ENCODE measurements at regions of chr4 and their contacts with region 1.

Region 1: DNA sequence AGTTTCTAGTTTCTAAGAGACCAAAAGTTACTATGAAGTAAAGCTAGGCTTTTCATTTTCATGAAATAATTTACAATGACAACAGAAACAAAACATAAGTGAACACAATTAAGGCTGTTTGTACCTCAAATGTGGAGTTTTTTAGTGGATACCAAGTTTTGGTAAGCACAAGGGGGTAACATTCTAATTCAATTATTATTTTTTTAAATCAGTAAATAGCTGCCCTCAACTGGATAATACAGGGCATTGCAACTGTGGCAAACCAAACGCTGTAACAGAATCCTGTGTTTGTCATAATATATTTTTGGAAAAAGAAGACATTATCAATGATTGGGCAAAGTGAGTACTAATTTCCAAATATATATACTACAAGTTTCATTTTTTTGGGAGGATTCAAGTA is 150.3 kb downstream of the FBXW7 start:
- DNase-seq: peak in 1 of 2 donors; percentile 4
- H3K4me3 ChIP-seq: no peak overlapping the region
- H3K27ac ChIP-seq: no peak overlapping the region
- H3K4me1 ChIP-seq: peaks cover 5 to 6% of the 10 kb centered on the region in 2 donors
- H3K27me3 ChIP-seq: no peaks in the 10 kb centered on the region
- CTCF ChIP-seq: peak in 5 of 6 experiments; percentile 24 to 65 (median 50)
- POLR2A ChIP-seq: no peak

Region 2: DNA sequence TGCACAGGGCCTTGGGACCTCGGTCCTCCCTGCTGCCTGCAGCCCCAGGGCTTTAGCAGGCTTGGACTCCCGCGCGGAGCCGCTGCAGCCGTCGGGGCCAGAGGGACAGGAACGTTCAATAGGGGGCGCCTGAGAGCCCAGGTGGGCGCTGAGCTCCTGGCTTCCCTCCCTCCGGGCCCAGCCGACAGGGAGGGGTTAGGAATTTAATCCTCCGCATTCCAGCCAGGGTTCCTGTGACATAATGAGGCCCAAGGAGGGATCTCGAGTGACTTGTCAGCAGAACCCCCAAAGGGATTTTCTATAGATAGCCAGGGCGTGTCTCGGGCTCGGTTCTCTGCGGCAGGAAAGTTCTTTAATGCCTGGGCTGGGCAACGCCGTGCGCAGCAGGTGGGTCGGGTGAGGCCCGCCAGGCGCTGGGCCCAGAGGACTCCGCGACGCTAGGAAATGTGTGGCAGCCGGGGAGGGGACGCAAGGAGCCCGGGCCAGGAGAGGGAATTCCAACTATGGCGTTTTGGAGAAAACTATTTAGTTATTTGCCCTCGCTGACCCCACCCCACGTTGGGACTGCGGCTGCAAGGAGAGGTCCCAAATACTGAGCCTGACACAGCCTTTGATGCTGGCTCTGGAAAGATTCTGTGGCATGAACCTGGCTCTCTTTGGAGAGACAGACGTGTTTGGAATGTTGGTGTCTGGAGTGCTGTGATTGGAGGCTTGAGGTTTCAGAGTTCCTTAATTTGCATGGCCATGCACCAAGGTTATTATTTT is 339.6 kb before region 1 on chr4:
- intact Hi-C with region 1: loop called (anchors 5 kb)
- DNase-seq: peak; percentile 64 to 80
- H3K4me3 ChIP-seq: peak overlapping the region in 1 of 3 donors; percentile 22
- H3K27ac ChIP-seq: no peak overlapping the region
- H3K4me1 ChIP-seq: peaks cover 10 to 11% of the 10 kb centered on the region in 2 donors
- H3K27me3 ChIP-seq: no peaks in the 10 kb centered on the region
- CTCF ChIP-seq: peak in 5 of 6 experiments; percentile 30 to 80 (median 54)
- POLR2A ChIP-seq: no peak